ENCODE measurements at regions of chr17 and their contacts with region 1.

Region 1: GRCh38 chr17:35161281-35161761 is 13.7 kb downstream of the UNC45B start:
- DNase-seq: peak in 7 of 9 donors; percentile 31 to 68 (median 55)
- ATAC-seq: peak; percentile 77
- H3K4me3 ChIP-seq: peak overlapping the region; percentile 30
- H3K4me3 Mint-ChIP-seq: peak overlapping the region; percentile 41 to 83 (median 72)
- H3K27ac ChIP-seq: peak overlapping the region; percentile 75
- H3K27ac Mint-ChIP-seq: peak overlapping the region; percentile 65 to 96 (median 90)
- H3K4me1 ChIP-seq: peaks cover 40 to 52% of the 10 kb centered on the region in 2 donors
- H3K4me1 Mint-ChIP-seq: peaks cover 34 to 76% (median 70%) of the 10 kb centered on the region in 7 donors
- H3K27me3 ChIP-seq: no peaks in the 10 kb centered on the region
- H3K27me3 Mint-ChIP-seq: peaks cover 0 to 11% (median 0%) of the 10 kb centered on the region in 5 donors

Region 2: GRCh38 chr17:35148144-35148543 is 13.2 kb before region 1 on chr17:
- CTCF ChIA-PET with region 1: interaction called, 11 read pairs
- POLR2A ChIA-PET with region 1: interaction called, 20 read pairs
- intact Hi-C with region 1: no loop called
- DNase-seq: no peak
- ATAC-seq: no peak
- H3K4me3 ChIP-seq: no peak overlapping the region
- H3K4me3 Mint-ChIP-seq: no peak overlapping the region
- H3K27ac ChIP-seq: no peak overlapping the region
- H3K27ac Mint-ChIP-seq: no peak overlapping the region
- H3K4me1 ChIP-seq: no peaks in the 10 kb centered on the region
- H3K4me1 Mint-ChIP-seq: peaks cover 0 to 8% (median 6%) of the 10 kb centered on the region in 7 donors
- H3K27me3 ChIP-seq: no peaks in the 10 kb centered on the region
- H3K27me3 Mint-ChIP-seq: peaks cover 0 to 12% (median 0%) of the 10 kb centered on the region in 5 donors